ENCODE measurements at regions of chr12 and their contacts with region 1.

Region 1: GRCh38 chr12:57213058-57213715 is 3.4 kb upstream of the NXPH4 start:
- DNase-seq: peak; percentile 87 to 88
- ATAC-seq: peak; percentile 30 to 87 (median 75)
- H3K4me3 ChIP-seq: no peak overlapping the region
- H3K27ac ChIP-seq: peak overlapping the region in 8 of 10 donors; percentile 24 to 76 (median 50)
- H3K4me1 ChIP-seq: peaks cover 15 to 73% (median 56%) of the 10 kb centered on the region in 9 donors
- H3K27me3 ChIP-seq: peaks cover 8 to 47% (median 32%) of the 10 kb centered on the region in 7 donors
- CTCF ChIP-seq: peak; percentile 92 to 97 (median 94)

Region 2: GRCh38 chr12:57238854-57239554 is 25.8 kb after region 1 on chr12:
- intact Hi-C with region 1: loop called in 9 of 10 experiments (anchors 1 to 5 kb)
- DNase-seq: peak; percentile 87 to 92
- ATAC-seq: peak; percentile 60 to 77 (median 72)
- H3K4me3 ChIP-seq: peak overlapping the region; percentile 23 to 61 (median 54)
- H3K27ac ChIP-seq: peak overlapping the region in 9 of 10 donors; percentile 48 to 85 (median 64)
- H3K4me1 ChIP-seq: peaks cover 40 to 97% (median 77%) of the 10 kb centered on the region in 9 donors
- H3K27me3 ChIP-seq: peaks cover 5 to 91% (median 57%) of the 10 kb centered on the region in 7 donors
- CTCF ChIP-seq: peak; percentile 100

Region 3: DNA sequence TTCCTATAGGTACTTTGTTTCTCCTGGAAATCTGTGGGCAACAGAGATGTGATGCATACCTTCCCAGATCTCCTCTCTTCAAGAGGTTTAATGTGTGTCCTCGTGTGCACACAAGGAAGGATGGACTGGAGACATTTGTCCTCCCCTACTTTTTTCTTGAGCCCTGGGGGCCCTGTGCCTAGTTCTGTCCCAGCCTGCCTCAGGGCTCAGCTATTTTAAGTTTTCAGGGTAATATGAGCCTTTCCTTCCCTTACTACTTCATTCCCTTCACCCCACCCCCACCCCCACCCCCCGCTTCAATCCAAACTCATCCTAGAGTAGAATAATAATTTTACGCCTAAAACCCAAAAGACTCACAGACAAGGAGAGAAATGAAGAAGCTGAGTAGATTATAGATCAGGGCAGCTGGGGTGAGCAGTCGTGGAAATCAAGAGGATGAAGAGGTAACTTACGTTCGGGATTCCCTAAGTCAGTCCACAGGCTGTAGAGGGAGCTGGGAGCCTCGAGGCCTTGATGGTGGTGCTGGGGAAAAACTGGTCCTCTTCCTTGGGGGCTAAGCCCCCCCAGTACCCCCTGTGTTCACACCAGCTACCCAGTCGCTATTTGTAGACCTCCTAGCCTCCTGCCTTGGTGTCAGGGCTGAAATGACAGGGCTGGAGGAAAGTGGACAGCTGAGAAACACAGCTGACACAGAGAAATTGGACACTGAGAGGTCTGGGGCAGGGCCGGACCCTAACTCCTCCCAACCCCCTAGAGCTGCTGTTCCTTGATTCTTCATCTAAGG is 37.5 kb after region 1 on chr12 and contains the start of gene STAC3:
- intact Hi-C with region 1: no loop called
- DNase-seq: no peak
- ATAC-seq: no peak
- H3K4me3 ChIP-seq: no peak within 1 kb of the TSS
- H3K27ac ChIP-seq: no peak within 1 kb of the TSS
- H3K4me1 ChIP-seq: peaks cover 0 to 11% (median 0%) of the 10 kb centered on the region in 9 donors
- H3K27me3 ChIP-seq: no peaks in the 10 kb centered on the region
- CTCF ChIP-seq: no peak
- total RNA-seq, gene STAC3: 0.30 to 2.9 (median 0.98) TPM

Region 4: DNA sequence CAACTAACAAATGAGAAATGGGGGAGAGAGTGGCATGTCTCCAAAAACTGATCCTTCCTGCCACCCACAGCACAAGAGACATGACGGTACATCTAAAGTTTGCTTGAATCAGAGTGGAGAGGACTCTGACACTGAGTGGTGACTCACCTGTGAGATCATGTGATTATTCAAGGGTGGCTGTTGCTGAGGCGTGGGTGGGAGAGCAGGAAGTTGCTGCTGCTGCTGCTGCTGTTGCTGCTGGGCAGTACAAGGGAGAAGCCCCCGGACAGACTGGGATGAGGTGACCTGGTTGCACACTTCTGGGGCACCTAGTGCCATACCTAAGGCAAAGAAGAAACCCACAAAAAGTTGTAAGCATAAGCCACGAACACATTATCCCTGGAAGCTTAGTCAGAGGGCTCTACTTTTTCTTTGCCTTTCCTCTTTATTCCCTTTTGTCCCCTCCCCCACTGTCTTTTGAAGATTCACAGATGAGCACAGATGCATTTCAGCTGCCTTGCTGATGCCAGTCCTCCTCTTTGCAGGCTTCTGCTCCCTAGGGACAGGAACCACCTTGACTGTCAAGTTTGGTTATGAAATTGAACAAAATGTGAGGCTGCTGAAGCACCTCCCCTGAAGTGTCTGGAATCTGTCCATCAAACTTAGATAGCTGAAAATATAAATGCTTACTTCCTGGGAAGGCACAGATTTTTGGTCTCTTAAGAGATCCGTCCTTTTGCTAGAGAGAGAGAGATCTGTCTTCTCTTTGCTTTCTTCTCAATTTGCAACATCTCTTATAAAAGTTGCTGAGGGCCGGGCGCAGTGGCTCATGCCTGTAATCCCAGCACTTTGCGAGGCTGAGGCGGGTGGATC is 67.2 kb after region 1 on chr12:
- intact Hi-C with region 1: loop called in 2 of 10 experiments (anchors 5 kb)
- DNase-seq: no peak
- ATAC-seq: peak in 5 of 8 donors; percentile 34 to 63 (median 44)
- H3K4me3 ChIP-seq: no peak overlapping the region
- H3K27ac ChIP-seq: peak overlapping the region in 1 of 10 donors; percentile 67
- H3K4me1 ChIP-seq: peaks cover 0 to 14% (median 0%) of the 10 kb centered on the region in 9 donors
- H3K27me3 ChIP-seq: no peaks in the 10 kb centered on the region
- CTCF ChIP-seq: no peak

Region 5: GRCh38 chr12:57319678-57320469 is 106.7 kb after region 1 on chr12:
- intact Hi-C with region 1: no loop called
- DNase-seq: peak in 1 of 2 donors; percentile 25
- ATAC-seq: peak in 3 of 8 donors; percentile 38 to 77 (median 71)
- H3K4me3 ChIP-seq: peak overlapping the region in 3 of 10 donors; percentile 12 to 28 (median 20)
- H3K27ac ChIP-seq: peak overlapping the region in 4 of 10 donors; percentile 11 to 68 (median 56)
- H3K4me1 ChIP-seq: peaks cover 0 to 23% (median 0%) of the 10 kb centered on the region in 9 donors
- H3K27me3 ChIP-seq: no peaks in the 10 kb centered on the region
- CTCF ChIP-seq: no peak

Region 6: DNA sequence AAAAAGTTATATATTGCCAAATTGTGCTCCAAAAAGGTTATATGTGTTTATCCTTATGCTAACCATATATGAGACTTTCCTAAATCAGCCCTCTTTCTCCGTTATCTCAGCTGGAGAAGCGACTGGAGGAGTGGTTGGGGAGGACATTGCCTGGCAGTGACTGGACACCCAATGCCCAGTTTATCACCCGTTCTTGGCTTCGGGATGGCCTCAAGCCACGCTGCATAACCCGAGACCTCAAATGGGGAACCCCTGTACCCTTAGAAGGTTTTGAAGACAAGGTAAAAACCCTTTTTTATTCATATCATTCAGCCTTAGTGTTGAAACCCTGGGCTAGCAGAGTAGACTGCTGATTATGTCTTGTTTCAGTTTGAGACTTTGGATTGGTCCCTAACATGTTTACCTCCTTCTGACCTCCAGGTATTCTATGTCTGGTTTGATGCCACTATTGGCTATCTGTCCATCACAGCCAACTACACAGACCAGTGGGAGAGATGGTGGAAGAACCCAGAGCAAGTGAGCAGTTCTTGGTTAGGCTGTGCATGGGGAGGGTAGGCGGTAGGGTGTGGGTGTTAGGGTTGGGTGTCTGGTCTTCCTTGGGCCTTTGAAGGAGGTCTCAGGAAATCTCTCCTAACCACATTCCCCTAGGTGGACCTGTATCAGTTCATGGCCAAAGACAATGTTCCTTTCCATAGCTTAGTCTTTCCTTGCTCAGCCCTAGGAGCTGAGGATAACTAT is 298.6 kb after region 1 on chr12:
- intact Hi-C with region 1: no loop called
- DNase-seq: no peak
- ATAC-seq: no peak
- H3K4me3 ChIP-seq: no peak overlapping the region
- H3K27ac ChIP-seq: peak overlapping the region in 1 of 10 donors; percentile 6
- H3K4me1 ChIP-seq: peaks cover 0 to 23% (median 4%) of the 10 kb centered on the region in 9 donors
- H3K27me3 ChIP-seq: no peaks in the 10 kb centered on the region
- CTCF ChIP-seq: no peak